WTC11 (cell line): ENCODE measurements at regions of chr2 and their contacts with region 1.

Region 1: DNA sequence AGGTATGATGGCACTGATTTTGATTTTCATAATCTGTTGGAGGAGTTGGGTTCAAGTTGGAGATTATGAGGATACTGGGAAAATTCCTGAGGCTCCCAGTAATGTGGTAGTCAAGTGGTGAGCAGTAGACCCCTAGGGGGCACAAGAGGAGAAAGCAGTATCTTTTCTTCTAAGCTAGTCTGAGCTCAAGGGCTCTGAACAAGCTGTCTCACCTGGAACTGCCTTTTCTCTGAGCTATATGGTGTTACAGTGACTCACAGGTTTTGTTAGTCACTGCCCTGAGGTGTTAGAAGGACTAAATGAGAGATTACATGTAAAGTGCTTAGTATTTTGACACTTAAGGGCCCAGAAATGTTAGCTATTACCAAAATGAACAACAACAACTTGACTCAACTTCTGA is 42.2 kb downstream of the CD302 start:
- DNase-seq: no peak
- ATAC-seq: peak; percentile 96
- H3K4me3 Mint-ChIP-seq: no peak overlapping the region
- H3K27ac Mint-ChIP-seq: no peak overlapping the region
- H3K4me1 Mint-ChIP-seq: no peaks in the 10 kb centered on the region
- H3K27me3 Mint-ChIP-seq: no peaks in the 10 kb centered on the region
- CTCF ChIP-seq: peak; percentile 25

Region 2: DNA sequence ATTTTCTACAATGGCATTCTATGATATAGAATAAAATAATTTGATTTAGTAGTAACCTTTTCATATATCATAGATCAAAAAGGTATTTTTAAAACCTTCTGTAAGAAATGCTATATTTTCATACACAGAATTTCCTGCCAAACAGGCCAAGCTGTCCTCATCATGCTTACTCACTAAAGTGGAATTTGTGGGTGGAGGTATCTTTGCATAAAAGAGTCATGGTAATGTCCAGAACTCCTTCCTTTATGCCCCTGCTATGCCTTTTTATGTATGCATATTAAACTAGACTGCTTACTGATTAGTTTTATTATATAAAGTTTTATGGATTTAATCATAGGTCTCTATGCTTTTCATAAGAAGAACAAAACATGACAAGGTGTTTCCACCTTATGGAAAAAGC is 71.0 kb before region 1 on chr2:
- CTCF ChIA-PET with region 1: no interaction called
- POLR2A ChIA-PET with region 1: no interaction called
- DNase-seq: no peak
- ATAC-seq: no peak
- H3K4me3 Mint-ChIP-seq: no peak overlapping the region
- H3K27ac Mint-ChIP-seq: no peak overlapping the region
- H3K4me1 Mint-ChIP-seq: peaks cover 11% of the 10 kb centered on the region
- H3K27me3 Mint-ChIP-seq: no peaks in the 10 kb centered on the region
- CTCF ChIP-seq: no peak

Region 3: DNA sequence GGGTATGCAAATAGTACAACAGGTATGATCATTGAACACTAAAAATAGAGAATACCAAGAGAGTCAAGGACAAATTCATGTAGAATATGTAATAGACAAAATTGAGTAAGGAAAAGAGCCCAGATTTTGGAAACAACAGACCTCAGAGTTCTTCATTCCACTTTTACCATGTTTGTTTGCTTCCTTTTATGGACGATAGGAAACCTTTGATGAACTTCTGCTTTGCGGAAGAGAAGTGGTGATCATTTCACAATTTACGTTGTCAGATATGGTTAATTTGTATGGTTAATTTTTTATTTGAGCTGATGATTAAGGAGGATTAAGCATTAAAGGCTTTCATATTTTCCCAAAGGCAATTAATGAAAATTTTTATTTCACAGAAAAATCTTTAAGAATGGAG is 27.2 kb before region 1 on chr2:
- CTCF ChIA-PET with region 1: no interaction called
- POLR2A ChIA-PET with region 1: no interaction called
- DNase-seq: no peak
- ATAC-seq: no peak
- H3K4me3 Mint-ChIP-seq: no peak overlapping the region
- H3K27ac Mint-ChIP-seq: no peak overlapping the region; the same call in 1 of the 2 replicates
- H3K4me1 Mint-ChIP-seq: peaks cover 10% of the 10 kb centered on the region
- H3K27me3 Mint-ChIP-seq: no peaks in the 10 kb centered on the region
- CTCF ChIP-seq: no peak

Region 4: GRCh38 chr2:159744363-159744762 is 11.4 kb before region 1 on chr2:
- CTCF ChIA-PET with region 1: interaction called, 14 read pairs
- POLR2A ChIA-PET with region 1: no interaction called
- DNase-seq: no peak
- ATAC-seq: no peak
- H3K4me3 Mint-ChIP-seq: no peak overlapping the region
- H3K27ac Mint-ChIP-seq: peak overlapping the region; percentile 84; the same call in 1 of the 2 replicates
- H3K4me1 Mint-ChIP-seq: no peaks in the 10 kb centered on the region
- H3K27me3 Mint-ChIP-seq: no peaks in the 10 kb centered on the region
- CTCF ChIP-seq: no peak

Region 5: GRCh38 chr2:159968279-159968900 is 212.6 kb after region 1 on chr2:
- CTCF ChIA-PET with region 1: interaction called, 14 read pairs
- POLR2A ChIA-PET with region 1: no interaction called
- DNase-seq: peak; percentile 40
- ATAC-seq: peak; percentile 98
- H3K4me3 Mint-ChIP-seq: no peak overlapping the region
- H3K27ac Mint-ChIP-seq: no peak overlapping the region
- H3K4me1 Mint-ChIP-seq: no peaks in the 10 kb centered on the region
- H3K27me3 Mint-ChIP-seq: no peaks in the 10 kb centered on the region
- CTCF ChIP-seq: peak; percentile 40; the same call in 1 of the 2 replicates